ENCODE measurements at regions of chr17 and their contacts with region 1.

Region 1: GRCh38 chr17:75319904-75320691 is 30.9 kb upstream of the SLC25A19 start:
- DNase-seq: no peak
- H3K4me3 ChIP-seq: no peak overlapping the region
- H3K27ac ChIP-seq: no peak overlapping the region
- H3K4me1 ChIP-seq: no peaks in the 10 kb centered on the region
- H3K27me3 ChIP-seq: no peaks in the 10 kb centered on the region
- CTCF ChIP-seq: no peak
- POLR2A ChIP-seq: no peak

Region 2: DNA sequence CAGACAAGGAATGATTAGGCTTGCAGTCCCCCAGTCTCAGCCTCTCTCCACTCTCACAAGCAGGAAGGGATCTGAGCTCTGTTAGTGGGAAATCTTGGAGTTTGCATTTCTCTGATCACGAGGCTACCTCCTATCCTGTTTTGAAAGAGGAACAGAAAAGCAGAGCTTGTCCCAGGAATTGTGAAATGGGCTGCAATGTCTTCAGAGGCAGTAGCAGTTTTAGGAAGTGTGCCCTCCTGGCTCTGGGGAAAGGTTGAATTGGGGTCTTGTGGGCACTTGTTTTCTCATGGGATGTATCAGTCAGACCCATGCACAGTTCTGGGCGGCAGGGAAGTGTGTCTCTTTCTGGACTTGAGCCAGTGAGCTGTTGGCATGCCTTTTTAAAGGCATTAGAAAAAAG is 91.8 kb before region 1 on chr17:
- intact Hi-C with region 1: no loop called
- DNase-seq: peak; percentile 46
- H3K4me3 ChIP-seq: no peak overlapping the region
- H3K27ac ChIP-seq: peak overlapping the region; percentile 75 to 80
- H3K4me1 ChIP-seq: no peaks in the 10 kb centered on the region
- H3K27me3 ChIP-seq: no peaks in the 10 kb centered on the region
- CTCF ChIP-seq: no peak
- POLR2A ChIP-seq: no peak

Region 3: DNA sequence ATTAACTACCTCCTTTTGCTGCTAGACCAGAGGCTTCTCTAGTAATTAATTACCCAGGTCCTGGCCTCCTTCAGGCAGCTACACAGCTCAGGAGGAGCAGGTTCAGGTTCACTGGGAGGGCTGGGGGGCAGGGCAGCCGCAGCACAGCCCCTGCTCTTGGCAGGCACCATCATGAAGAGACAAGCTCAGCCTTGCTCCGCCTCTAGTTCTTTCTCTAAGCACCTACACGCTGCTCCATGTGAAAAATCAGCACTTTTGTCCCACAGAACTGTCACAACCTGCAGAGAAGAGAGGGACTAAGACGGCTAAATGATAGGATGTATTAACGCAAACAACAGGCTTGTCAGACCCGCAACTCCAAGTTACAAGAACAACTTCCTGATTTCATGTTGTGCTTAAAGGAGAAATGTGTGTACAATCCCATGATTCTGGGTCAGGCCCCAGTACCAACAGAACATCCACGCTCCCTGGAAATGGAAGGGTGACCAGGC is 32.0 kb after region 1 on chr17:
- intact Hi-C with region 1: no loop called
- DNase-seq: peak; percentile 30
- H3K4me3 ChIP-seq: no peak overlapping the region
- H3K27ac ChIP-seq: no peak overlapping the region
- H3K4me1 ChIP-seq: peaks cover 9% of the 10 kb centered on the region
- H3K27me3 ChIP-seq: no peaks in the 10 kb centered on the region
- CTCF ChIP-seq: no peak
- POLR2A ChIP-seq: no peak

Region 4: DNA sequence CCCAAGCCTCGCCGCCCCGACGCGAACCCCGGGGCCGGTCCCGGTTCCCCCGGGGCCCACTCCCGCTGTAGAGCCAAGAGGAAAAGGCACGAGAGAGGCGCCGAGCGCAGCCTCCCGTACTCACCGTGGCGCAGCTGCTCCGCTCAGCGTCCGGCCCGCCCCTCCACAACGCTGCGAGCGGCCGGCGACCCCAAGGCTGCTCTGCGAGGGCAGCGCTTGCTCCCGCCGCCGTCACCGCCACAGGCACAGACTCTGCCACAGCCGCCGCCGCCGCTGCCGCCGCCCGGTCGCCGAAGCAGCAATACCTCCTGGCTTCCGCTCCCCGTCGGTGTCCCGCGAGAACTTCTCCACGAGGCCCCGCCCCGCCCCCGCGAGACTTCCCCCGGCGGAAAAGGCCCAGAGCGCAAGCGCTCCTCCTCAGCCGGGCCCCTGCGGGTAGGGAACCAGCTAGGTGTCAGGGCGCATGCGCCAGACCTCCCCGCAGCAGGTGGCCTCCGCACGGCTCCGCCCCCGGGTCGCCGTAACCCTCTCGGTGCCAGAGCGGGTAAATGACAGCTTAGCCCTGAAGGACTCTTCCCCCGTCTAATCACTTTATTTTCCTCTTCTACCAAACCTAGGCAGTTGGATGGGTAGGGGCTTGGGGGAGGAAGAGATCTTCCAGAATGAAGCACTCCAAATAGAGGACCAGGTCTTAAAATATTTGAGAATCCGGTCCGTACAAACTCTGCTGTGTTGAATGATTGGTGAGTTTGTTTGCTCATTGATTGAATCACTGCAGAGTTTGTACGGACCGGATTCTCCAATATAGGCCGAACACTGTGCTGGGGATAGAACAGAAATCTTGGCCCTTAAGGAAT is 85.5 kb after region 1 on chr17 and contains the start of gene GRB2:
- intact Hi-C with region 1: loop called (anchors 2 kb)
- DNase-seq: peak; percentile 98
- H3K4me3 ChIP-seq: peak within 1 kb of the TSS; percentile 78 to 84
- H3K27ac ChIP-seq: peak within 1 kb of the TSS; percentile 76 to 82
- H3K4me1 ChIP-seq: no peaks in the 10 kb centered on the region
- H3K27me3 ChIP-seq: no peaks in the 10 kb centered on the region
- CTCF ChIP-seq: peak in 3 of 4 experiments; percentile 13 to 30 (median 18)
- POLR2A ChIP-seq: peak; percentile 91
- total RNA-seq, gene GRB2: 88.3 to 95.7 TPM

Measured in prostate gland (tissue), 2 donors.